Psoas muscle (tissue), 8 donors: ENCODE measurements at regions of chr1 and their contacts with region 1.

Region 1: GRCh38 chr1:150561974-150562445 is 12.8 kb downstream of the ADAMTSL4 start:
- DNase-seq: peak; percentile 93 to 97
- ATAC-seq: peak; percentile 77 to 80 (median 78)
- H3K4me3 ChIP-seq: peak overlapping the region; percentile 71
- H3K27ac ChIP-seq: peak overlapping the region; percentile 100
- H3K4me1 ChIP-seq: peaks cover 67% of the 10 kb centered on the region
- H3K27me3 ChIP-seq: no peaks in the 10 kb centered on the region
- CTCF ChIP-seq: no peak

Region 2: DNA sequence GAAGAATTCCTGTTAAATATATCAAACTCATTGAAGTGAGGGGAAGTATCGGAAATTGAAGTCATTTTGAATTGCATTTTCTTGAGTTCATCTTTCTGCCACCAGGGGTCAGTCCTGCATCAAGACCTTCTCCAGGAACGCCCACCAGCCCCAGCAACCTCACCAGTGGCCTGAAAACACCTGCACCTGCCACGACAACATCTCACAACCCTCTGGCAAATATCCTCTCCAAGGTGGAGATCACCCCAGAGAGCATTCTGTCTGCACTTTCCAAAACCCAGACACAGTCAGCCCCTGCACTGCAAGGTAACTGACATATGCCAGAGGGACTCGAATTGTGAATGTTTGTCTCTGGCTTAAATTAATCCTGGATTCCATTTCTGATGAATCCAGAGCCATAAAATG is 97.6 kb before region 1 on chr1:
- intact Hi-C with region 1: loop called in 1 of 2 experiments (anchors 5 kb)
- DNase-seq: peak; percentile 40 to 70
- ATAC-seq: peak; percentile 78 to 82 (median 81)
- H3K4me3 ChIP-seq: no peak overlapping the region
- H3K27ac ChIP-seq: no peak overlapping the region
- H3K4me1 ChIP-seq: no peaks in the 10 kb centered on the region
- H3K27me3 ChIP-seq: no peaks in the 10 kb centered on the region
- CTCF ChIP-seq: peak; percentile 77

Region 3: DNA sequence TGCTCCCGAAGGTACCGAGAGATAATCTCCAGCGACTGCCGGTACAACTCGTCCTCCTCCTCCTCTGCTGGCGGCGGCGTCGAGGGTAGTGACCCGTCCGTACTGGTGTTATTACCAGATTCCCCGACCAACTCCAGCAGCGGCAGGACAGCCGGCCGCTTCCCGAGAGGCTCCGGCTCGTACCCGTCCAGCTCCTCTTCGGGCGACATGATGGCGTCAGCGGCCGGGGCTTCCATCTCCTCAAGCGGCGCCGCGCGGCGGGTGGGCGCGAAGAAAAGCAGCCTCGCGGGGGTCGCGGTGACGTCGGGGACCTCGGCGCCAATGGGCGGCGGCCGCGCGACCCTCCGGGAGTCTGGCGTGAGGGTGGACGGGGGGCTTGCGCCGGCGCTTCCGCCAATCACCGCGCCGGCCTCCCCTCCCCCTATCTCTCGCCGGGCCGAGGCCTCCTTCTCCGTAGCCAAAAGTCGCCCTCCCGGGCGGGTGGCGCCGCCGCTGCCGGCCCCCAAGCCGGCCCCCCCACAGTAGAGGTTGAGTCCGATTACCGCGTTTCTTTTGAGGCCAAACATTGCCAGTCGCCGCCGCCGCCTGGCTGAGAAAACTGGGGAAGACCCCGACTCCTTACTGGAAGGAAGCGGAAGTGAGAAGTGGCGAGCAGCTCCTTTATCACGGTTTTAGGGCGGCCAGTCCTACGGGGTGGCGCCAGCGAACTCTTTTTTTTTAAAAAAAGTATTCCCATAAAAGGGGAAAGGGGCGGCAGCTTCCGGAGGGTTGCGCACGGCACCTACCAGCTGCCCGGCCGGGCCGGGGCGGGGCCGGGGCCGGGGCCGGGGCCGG is 17.2 kb after region 1 on chr1 and contains the start of gene MCL1:
- intact Hi-C with region 1: loop called (anchors 1 to 2 kb)
- DNase-seq: peak; percentile 92 to 97
- ATAC-seq: peak; percentile 77 to 84 (median 81)
- H3K4me3 ChIP-seq: peak within 1 kb of the TSS; percentile 92
- H3K27ac ChIP-seq: peak within 1 kb of the TSS; percentile 100
- H3K4me1 ChIP-seq: peaks cover 20% of the 10 kb centered on the region
- H3K27me3 ChIP-seq: no peaks in the 10 kb centered on the region
- CTCF ChIP-seq: no peak
- total RNA-seq, gene MCL1: 101 to 192 (median 129) TPM

Region 4: GRCh38 chr1:150621497-150622302 is 59.7 kb after region 1 on chr1:
- intact Hi-C with region 1: loop called in 1 of 2 experiments (anchors 2 kb)
- DNase-seq: peak; percentile 28 to 59
- ATAC-seq: peak in 3 of 4 donors; percentile 28 to 49 (median 46)
- H3K4me3 ChIP-seq: peak overlapping the region; percentile 7
- H3K27ac ChIP-seq: peak overlapping the region; percentile 71
- H3K4me1 ChIP-seq: peaks cover 41% of the 10 kb centered on the region
- H3K27me3 ChIP-seq: no peaks in the 10 kb centered on the region
- CTCF ChIP-seq: peak; percentile 67

Region 5: DNA sequence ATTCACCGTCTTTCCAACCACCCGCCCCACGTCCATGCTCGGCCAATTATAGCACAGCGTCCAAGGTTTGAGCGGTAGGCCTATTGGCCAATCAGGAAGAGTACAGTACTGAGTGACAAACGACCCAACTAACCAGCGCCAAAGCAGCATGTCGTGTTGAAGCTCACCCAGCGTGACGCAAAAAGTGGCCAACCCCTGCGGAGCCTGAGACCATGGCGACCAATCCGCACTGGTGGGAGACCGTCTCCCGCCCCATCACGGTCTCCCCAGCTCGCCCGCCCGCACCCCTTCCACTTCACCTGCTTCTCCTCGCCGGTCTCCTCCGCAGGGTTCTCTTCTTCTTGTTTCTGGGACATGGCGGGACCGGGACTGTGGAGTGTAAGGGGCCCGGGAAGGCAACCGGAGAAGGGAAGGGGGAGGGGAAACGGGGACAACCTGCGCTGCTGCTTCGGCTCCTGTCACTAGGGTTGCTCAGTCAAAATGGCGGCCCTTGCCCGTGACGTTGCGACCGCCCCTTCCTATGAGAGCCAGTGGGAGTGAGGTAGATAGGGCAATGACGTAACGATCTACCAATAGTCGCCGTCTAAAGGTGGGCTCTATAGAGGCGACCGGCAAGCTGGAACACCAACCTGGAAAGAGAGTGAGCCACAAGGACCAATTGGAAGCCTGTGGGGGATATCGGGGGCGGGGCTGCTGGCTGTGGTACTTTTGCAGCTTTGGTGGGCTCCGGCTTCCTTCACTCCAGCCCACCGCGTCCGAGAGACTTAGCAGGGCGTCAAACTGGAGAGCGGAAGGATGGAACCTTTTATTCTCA is 67.3 kb after region 1 on chr1 and contains the start of gene ENSA:
- intact Hi-C with region 1: loop called in 1 of 2 experiments (anchors 2 kb)
- DNase-seq: peak; percentile 97 to 99
- ATAC-seq: peak; percentile 93 to 96 (median 94)
- H3K4me3 ChIP-seq: peak within 1 kb of the TSS; percentile 77
- H3K27ac ChIP-seq: peak within 1 kb of the TSS; percentile 93
- H3K4me1 ChIP-seq: peaks cover 30% of the 10 kb centered on the region
- H3K27me3 ChIP-seq: no peaks in the 10 kb centered on the region
- CTCF ChIP-seq: no peak
- total RNA-seq, gene ENSA: 120 to 196 (median 162) TPM

Region 6: DNA sequence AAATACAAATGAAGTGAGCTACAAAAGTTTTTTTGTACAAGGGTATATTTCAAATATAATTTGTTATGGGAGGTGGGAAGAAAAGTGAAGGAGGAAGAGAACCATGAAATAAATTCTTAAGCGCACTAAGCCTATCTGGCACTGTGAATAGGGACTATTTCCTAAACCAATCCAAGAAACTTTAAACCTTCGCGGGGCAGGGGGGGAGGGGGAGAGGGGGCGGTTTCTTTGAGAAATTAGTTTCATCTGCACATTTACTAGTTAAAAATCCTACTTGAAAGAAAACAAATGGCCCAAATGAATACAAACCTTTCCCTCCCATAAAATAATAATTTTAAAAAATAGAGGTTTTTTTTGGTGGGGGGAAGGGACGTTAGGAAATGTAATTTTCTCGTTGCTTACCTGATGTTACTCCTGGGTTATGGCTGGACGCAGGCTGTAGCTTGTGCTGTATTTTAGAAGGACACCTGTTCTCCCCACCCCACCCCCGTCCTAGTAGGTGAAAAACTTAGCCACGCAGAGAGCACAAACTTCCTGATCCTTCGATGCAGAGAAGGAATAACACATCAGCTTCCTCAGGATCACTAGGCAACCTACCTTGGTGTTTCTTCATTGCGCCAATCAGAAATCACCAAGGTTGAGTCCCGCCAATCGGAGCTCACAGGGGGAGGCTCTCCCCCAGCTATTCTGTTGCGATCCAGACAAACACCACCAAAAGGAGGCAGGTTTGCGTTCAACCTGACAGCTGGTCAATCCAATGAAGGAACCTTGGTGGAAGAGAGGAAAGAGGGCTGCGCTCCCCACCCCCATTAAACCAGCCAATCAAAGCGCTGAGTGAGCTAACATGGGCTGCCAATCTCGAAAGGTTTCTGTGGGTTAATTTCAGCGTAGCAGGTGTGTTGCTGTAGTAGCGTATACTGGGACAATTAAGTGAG is 134.8 kb after region 1 on chr1 and contains the start of gene GOLPH3L:
- intact Hi-C with region 1: loop called in 1 of 2 experiments (anchors 10 kb)
- DNase-seq: peak; percentile 87 to 91
- ATAC-seq: peak; percentile 99 to 100 (median 100)
- H3K4me3 ChIP-seq: peak within 1 kb of the TSS; percentile 82
- H3K27ac ChIP-seq: peak within 1 kb of the TSS; percentile 79
- H3K4me1 ChIP-seq: peaks cover 17% of the 10 kb centered on the region
- H3K27me3 ChIP-seq: no peaks in the 10 kb centered on the region
- CTCF ChIP-seq: peak; percentile 26
- total RNA-seq, gene GOLPH3L: 12.0 to 22.4 (median 13.6) TPM